CD4-positive, alpha-beta memory T cell (primary cell): ENCODE measurements at regions of chr14 and their contacts with region 1.

Region 1: DNA sequence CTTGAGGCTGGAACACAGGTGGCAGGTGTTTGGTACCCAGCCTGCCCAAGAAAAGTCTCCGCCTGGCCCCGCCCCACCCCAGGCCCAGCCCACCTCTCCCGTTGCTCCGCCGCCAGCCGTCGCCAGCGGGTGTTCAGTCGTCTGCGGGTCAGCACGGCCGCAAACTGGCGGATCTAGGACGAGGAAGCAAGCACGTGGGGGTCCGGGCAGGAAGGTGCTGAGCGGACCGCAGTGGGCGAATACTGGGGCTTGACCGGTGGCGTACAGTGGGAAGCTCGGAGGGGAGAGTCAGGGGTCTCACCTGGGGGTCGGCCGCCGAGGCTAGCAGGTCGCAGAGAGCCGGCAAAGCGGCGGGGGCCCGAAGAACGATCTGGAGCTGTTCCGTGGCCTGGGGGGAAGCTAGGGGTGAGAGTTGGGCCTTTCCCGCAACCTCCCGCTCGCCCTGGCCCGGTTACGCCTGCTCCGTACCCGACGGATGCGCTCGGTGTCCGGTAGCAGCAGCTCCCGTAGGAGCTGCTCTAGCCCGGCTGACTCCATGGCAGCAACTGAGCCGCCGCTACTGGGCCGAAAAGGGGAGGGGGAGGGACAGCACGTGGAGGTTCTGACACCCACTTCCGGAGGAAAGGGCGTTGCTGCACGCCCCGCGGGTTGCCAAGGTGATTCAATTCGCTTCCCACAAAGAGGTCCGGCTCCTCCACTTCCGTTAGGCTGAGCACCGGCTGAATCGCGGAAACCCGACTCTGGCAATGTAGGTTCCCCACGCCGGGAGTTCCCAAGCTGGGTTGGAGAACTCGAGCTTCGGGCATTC is at the start of gene IPO4:
- DNase-seq: peak; percentile 92 to 98 (median 95)
- H3K4me3 ChIP-seq: peak within 1 kb of the TSS; percentile 31 to 90
- H3K4me3 Mint-ChIP-seq: peak within 1 kb of the TSS; percentile 90 to 96 (median 93)
- H3K27ac ChIP-seq: peak within 1 kb of the TSS; percentile 80
- H3K27ac Mint-ChIP-seq: peak within 1 kb of the TSS; percentile 93 to 96 (median 96)
- H3K4me1 ChIP-seq: peaks cover 23% of the 10 kb centered on the region
- H3K4me1 Mint-ChIP-seq: peaks cover 20 to 56% (median 36%) of the 10 kb centered on the region in 4 donors
- H3K27me3 ChIP-seq: no peaks in the 10 kb centered on the region
- H3K27me3 Mint-ChIP-seq: no peaks in the 10 kb centered on the region
- total RNA-seq, gene IPO4: 22.4 to 30.2 TPM

Region 2: DNA sequence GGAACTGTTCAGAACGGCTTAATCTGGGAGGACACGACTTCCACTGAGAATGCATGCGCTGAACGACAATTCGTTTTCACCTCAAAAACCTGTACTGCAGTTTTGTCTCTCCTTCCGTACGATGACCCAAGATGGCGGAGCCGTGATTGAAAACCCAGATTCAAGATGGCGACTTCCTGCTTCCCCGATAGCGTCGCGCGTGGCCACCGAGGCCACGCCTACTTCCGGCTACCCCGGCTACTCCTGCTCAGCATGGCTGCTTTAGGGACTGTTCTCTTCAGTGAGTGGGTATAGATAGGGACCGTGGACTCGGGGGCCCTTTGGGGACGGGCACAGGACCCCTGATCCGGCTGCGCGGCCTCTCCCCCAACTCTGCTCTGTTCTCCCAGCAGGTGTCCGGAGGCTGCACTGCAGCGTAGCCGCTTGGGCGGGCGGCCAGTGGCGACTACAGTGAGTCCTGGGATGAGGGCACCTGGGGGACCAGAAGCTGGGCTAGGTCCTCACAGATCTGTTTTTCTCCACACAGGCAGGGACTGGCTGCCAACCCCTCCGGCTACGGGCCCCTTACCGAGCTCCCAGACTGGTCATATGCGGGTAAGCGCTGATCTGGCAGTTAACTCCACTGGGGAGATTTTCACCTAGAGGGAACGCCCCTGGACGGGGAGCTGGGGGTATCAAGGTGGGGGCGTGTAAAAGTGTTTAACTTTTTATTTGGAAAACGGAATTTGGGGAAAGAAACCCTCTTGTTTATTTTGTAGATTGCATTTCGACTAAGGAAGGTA is 1358.6 kb before region 1 on chr14 and contains the start of gene MRPL52:
- CTCF ChIA-PET with region 1: no interaction called
- POLR2A ChIA-PET with region 1: no interaction called
- intact Hi-C with region 1: no loop called
- DNase-seq: peak; percentile 86 to 93 (median 88)
- H3K4me3 ChIP-seq: peak within 1 kb of the TSS; percentile 80 to 85
- H3K4me3 Mint-ChIP-seq: peak within 1 kb of the TSS; percentile 91 to 96 (median 92)
- H3K27ac ChIP-seq: peak within 1 kb of the TSS; percentile 85
- H3K27ac Mint-ChIP-seq: peak within 1 kb of the TSS; percentile 96 to 99 (median 98)
- H3K4me1 ChIP-seq: peaks cover 18% of the 10 kb centered on the region
- H3K4me1 Mint-ChIP-seq: peaks cover 17 to 32% (median 24%) of the 10 kb centered on the region in 4 donors
- H3K27me3 ChIP-seq: no peaks in the 10 kb centered on the region
- H3K27me3 Mint-ChIP-seq: peaks cover 0 to 1% of the 10 kb centered on the region in 2 donors
- total RNA-seq, gene MRPL52: 58.0 to 68.3 TPM

Region 3: DNA sequence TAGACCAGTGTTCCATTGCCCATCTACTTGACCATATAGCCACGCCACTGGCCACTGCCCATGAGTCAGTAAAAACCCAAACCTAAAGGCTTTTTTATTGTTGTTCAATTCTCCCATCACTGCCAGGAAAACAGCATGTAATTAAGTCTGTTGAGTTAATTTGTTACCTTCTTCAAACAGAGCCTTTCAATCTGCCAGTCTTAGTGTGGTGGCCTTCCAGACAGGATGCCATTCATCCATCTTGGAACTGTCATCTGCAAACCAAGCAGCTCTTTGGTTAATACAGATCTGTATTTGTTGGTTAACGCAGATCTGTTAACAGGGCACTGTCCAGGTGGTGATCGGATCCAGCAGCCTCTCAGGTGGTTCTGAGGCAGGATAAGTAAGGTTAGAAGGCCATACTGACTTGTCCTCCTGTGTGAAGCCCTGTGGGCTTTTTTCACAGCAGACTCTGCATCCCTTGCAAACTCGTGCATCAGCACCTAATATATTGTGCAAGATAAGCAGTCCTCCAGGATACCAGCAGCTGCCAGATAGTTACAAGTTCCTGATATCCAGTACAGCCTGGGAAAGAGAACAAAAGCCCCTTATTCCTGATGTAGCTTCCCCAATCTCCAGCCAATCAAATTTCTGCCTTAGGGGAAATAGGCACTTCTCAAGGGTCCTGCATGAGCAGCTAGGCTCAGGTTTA is 293.9 kb before region 1 on chr14:
- CTCF ChIA-PET with region 1: no interaction called
- POLR2A ChIA-PET with region 1: no interaction called
- intact Hi-C with region 1: no loop called
- DNase-seq: no peak
- H3K4me3 ChIP-seq: no peak overlapping the region
- H3K4me3 Mint-ChIP-seq: no peak overlapping the region
- H3K27ac ChIP-seq: no peak overlapping the region
- H3K27ac Mint-ChIP-seq: no peak overlapping the region
- H3K4me1 ChIP-seq: no peaks in the 10 kb centered on the region
- H3K4me1 Mint-ChIP-seq: no peaks in the 10 kb centered on the region
- H3K27me3 ChIP-seq: no peaks in the 10 kb centered on the region
- H3K27me3 Mint-ChIP-seq: peaks cover 8 to 15% of the 10 kb centered on the region in 2 donors

Region 4: DNA sequence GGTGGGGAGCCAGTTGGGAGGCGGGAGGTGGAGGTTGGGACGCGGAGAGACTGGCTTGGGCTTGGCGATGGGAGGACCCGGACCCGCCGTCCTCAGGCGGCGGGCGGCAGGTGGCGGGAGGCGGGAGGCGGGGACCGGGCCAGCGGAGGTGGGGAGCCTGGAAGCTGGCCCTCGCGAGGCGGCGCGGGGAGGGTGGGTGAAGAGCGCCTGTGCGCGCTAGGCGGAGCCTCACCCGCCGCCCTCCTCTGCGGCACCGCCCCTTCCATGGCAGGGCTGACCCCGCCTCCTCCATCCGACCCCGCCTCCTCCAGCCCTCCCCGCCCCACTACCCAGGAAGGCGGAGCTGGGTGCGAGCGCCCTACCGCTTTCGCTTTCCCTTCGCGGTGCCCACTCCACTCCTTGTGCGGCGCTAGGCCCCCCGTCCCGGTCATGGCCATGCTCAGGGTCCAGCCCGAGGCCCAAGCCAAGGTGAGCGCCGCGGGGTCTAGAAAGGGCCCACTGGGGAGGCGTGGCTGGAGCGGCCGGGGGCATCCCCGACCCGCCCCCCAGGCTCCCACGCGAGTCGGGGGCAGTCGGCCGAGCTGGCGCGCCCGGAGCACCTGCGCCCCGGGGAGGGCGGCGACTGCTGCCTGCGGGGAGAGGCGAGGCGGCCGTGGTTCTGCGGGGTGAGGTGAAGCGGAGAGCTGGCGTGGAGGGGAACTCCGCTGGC is 52.5 kb before region 1 on chr14 and contains the start of gene PSME1:
- CTCF ChIA-PET with region 1: no interaction called
- POLR2A ChIA-PET with region 1: interaction called, 26 read pairs
- intact Hi-C with region 1: no loop called
- DNase-seq: peak; percentile 92 to 94 (median 93)
- H3K4me3 ChIP-seq: peak within 1 kb of the TSS; percentile 30 to 87
- H3K4me3 Mint-ChIP-seq: peak within 1 kb of the TSS; percentile 87 to 94 (median 92)
- H3K27ac ChIP-seq: peak within 1 kb of the TSS; percentile 84
- H3K27ac Mint-ChIP-seq: peak within 1 kb of the TSS; percentile 88 to 96 (median 94)
- H3K4me1 ChIP-seq: peaks cover 59% of the 10 kb centered on the region
- H3K4me1 Mint-ChIP-seq: peaks cover 35 to 70% (median 55%) of the 10 kb centered on the region in 4 donors
- H3K27me3 ChIP-seq: no peaks in the 10 kb centered on the region
- H3K27me3 Mint-ChIP-seq: no peaks in the 10 kb centered on the region
- total RNA-seq, gene PSME1: 257 to 273 TPM

Region 5: GRCh38 chr14:24146978-24147760 is 41.3 kb before region 1 on chr14 and contains the start of gene RNF31:
- CTCF ChIA-PET with region 1: interaction called, 3 read pairs
- POLR2A ChIA-PET with region 1: interaction called, 44 read pairs
- intact Hi-C with region 1: loop called (anchors 1 kb)
- DNase-seq: peak; percentile 95 to 99 (median 97)
- H3K4me3 ChIP-seq: peak within 1 kb of the TSS; percentile 85 to 99
- H3K4me3 Mint-ChIP-seq: peak within 1 kb of the TSS; percentile 97 to 100 (median 98)
- H3K27ac ChIP-seq: peak within 1 kb of the TSS; percentile 92
- H3K27ac Mint-ChIP-seq: peak within 1 kb of the TSS; percentile 95 to 99 (median 98)
- H3K4me1 ChIP-seq: peaks cover 63% of the 10 kb centered on the region
- H3K4me1 Mint-ChIP-seq: peaks cover 32 to 80% (median 54%) of the 10 kb centered on the region in 4 donors
- H3K27me3 ChIP-seq: no peaks in the 10 kb centered on the region
- H3K27me3 Mint-ChIP-seq: no peaks in the 10 kb centered on the region
- total RNA-seq, gene RNF31: 108 to 113 TPM

Region 6: DNA sequence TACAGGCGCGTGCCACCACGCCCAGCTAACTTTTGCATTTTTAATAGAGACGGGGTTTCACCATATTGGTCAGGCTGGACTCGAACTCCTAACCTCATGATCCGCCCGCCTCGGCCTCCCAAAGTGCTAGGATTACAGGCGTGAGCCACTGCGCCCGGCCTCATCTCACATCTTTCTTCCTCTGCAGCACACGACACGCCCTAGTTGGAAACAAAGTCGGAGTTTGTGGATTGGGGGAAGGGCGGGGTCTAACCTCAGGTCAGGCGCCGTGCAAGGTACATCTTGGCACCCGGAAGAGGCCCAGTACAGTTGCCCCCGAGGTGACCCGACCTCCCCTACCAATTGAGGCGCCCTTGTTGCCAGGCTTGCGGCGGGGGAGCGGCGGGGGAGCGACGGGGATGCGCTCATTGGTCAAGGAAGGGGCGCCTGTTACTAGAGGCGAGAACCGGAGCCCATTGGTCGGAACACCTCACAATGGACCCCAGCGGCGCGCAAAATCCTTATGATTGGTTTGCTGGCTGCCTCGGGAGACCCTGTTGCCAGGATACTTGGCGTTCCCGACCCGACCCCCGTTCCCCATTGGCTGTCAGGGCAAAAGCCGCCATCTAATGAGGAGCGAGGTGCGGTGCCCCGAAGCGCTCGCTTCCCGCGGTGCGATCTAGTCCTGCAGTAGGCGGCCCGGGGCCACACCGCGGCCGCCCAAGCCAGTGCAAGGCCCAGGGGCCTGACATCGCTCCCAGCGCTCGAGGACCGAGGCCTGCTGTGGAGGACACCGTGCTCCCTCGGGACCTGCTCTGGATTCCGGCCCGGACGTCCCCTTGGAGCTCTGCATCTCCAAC is 16.8 kb before region 1 on chr14 and contains the start of gene REC8:
- CTCF ChIA-PET with region 1: no interaction called
- POLR2A ChIA-PET with region 1: interaction called, 5 read pairs
- intact Hi-C with region 1: loop called (anchors 1 kb)
- DNase-seq: peak; percentile 66 to 84 (median 73)
- H3K4me3 ChIP-seq: peak within 1 kb of the TSS in 1 of 2 donors; percentile 26
- H3K4me3 Mint-ChIP-seq: peak within 1 kb of the TSS; percentile 82 to 91 (median 87)
- H3K27ac ChIP-seq: peak within 1 kb of the TSS; percentile 42
- H3K27ac Mint-ChIP-seq: peak within 1 kb of the TSS; percentile 63 to 88 (median 85)
- H3K4me1 ChIP-seq: peaks cover 22% of the 10 kb centered on the region
- H3K4me1 Mint-ChIP-seq: peaks cover 20 to 56% (median 35%) of the 10 kb centered on the region in 4 donors
- H3K27me3 ChIP-seq: no peaks in the 10 kb centered on the region
- H3K27me3 Mint-ChIP-seq: no peaks in the 10 kb centered on the region
- total RNA-seq, gene REC8: 27.7 to 30.5 TPM

Region 7: GRCh38 chr14:24232121-24232644 is 43.7 kb after region 1 on chr14 and contains the start of gene NEDD8:
- CTCF ChIA-PET with region 1: interaction called, 4 read pairs
- POLR2A ChIA-PET with region 1: interaction called, 9 read pairs
- intact Hi-C with region 1: loop called (anchors 1 kb)
- DNase-seq: peak; percentile 89 to 96 (median 89)
- H3K4me3 ChIP-seq: peak within 1 kb of the TSS; percentile 100
- H3K4me3 Mint-ChIP-seq: peak within 1 kb of the TSS; percentile 97 to 99 (median 98)
- H3K27ac ChIP-seq: peak within 1 kb of the TSS; percentile 88
- H3K27ac Mint-ChIP-seq: peak within 1 kb of the TSS; percentile 95 to 99 (median 97)
- H3K4me1 ChIP-seq: peaks cover 41% of the 10 kb centered on the region
- H3K4me1 Mint-ChIP-seq: peaks cover 41 to 68% (median 54%) of the 10 kb centered on the region in 4 donors
- H3K27me3 ChIP-seq: no peaks in the 10 kb centered on the region
- H3K27me3 Mint-ChIP-seq: no peaks in the 10 kb centered on the region
- total RNA-seq, gene NEDD8: 116 to 127 TPM

Region 8: DNA sequence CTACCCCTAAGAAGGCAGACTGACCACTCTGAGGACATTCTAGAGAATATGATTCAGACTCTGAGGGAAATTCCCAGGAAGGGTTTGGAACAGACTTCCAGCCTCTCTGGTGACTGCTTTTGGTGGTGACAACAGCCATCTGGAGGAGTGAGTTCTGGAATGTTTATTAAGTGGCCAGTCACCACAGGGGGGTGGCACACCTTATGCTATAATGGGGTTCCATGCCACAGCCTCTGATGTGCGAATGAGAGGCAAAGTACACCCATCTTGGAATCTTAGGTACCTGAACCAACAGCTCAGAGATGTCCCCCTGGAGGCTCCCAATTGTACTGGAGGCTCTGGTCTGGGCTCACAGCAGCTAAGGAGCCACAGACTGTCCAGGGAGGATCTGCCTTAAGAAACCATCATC is 63.4 kb after region 1 on chr14:
- CTCF ChIA-PET with region 1: no interaction called
- POLR2A ChIA-PET with region 1: no interaction called
- intact Hi-C with region 1: no loop called
- DNase-seq: no peak
- H3K4me3 ChIP-seq: no peak overlapping the region
- H3K4me3 Mint-ChIP-seq: no peak overlapping the region
- H3K27ac ChIP-seq: no peak overlapping the region
- H3K27ac Mint-ChIP-seq: peak overlapping the region in 2 of 7 donors; percentile 7 to 30
- H3K4me1 ChIP-seq: peaks cover 15% of the 10 kb centered on the region
- H3K4me1 Mint-ChIP-seq: peaks cover 16 to 30% (median 24%) of the 10 kb centered on the region in 4 donors
- H3K27me3 ChIP-seq: no peaks in the 10 kb centered on the region
- H3K27me3 Mint-ChIP-seq: no peaks in the 10 kb centered on the region

Region 9: DNA sequence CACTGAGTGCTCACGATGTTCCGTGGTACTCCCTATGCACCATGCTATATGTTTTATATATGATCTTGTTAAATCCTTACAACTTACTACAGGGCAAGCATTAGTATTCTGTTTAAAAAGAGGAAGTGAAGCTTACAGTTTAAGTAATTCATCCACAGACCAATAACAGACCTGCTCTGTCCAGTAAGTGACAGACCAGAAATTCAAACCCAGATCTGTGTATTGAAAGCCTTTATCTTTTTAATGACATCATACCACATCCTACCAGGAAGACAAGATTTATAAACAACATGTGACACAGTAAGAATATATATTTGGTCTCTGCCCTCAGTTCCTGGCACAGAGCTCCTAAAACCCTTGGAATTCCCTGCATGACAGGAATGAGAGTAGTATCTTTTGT is 655.0 kb after region 1 on chr14:
- CTCF ChIA-PET with region 1: no interaction called
- POLR2A ChIA-PET with region 1: no interaction called
- intact Hi-C with region 1: no loop called
- DNase-seq: no peak
- H3K4me3 ChIP-seq: no peak overlapping the region
- H3K4me3 Mint-ChIP-seq: no peak overlapping the region
- H3K27ac ChIP-seq: no peak overlapping the region
- H3K27ac Mint-ChIP-seq: no peak overlapping the region
- H3K4me1 ChIP-seq: no peaks in the 10 kb centered on the region
- H3K4me1 Mint-ChIP-seq: no peaks in the 10 kb centered on the region
- H3K27me3 ChIP-seq: peaks cover 5% of the 10 kb centered on the region
- H3K27me3 Mint-ChIP-seq: peaks cover 7 to 11% of the 10 kb centered on the region in 2 donors